ENCODE measurements at regions of chr6 and their contacts with region 1.

Region 1: GRCh38 chr6:41591859-41592502 is 45.8 kb downstream of the FOXP4 start:
- DNase-seq: peak; percentile 92
- H3K4me3 ChIP-seq: peak overlapping the region in 1 of 2 experiments; percentile 28; a peak in 1 of 4 replicates
- H3K27ac ChIP-seq: no peak overlapping the region
- H3K4me1 ChIP-seq: peaks cover 0 to 27% of the 10 kb centered on the region in 2 experiments; a peak in 1 of 4 replicates
- H3K27me3 ChIP-seq: no peaks in the 10 kb centered on the region
- CTCF ChIP-seq: peak; percentile 89
- EP300 ChIP-seq: no peak
- RAD21 ChIP-seq: peak; percentile 92

Region 2: GRCh38 chr6:41449399-41450245 is 142.4 kb before region 1 on chr6:
- CTCF ChIA-PET with region 1: interaction called, 12 read pairs
- POLR2A ChIA-PET with region 1: no interaction called
- DNase-seq: no peak
- H3K4me3 ChIP-seq: no peak overlapping the region
- H3K27ac ChIP-seq: no peak overlapping the region; a peak in 1 of 4 replicates
- H3K4me1 ChIP-seq: peaks cover 0 to 20% of the 10 kb centered on the region in 2 experiments; a peak in 1 of 4 replicates
- H3K27me3 ChIP-seq: peaks cover 4% of the 10 kb centered on the region; the same call in 1 of the 2 replicates
- CTCF ChIP-seq: no peak
- EP300 ChIP-seq: no peak
- RAD21 ChIP-seq: no peak

Region 3: GRCh38 chr6:41463062-41463930 is 128.7 kb before region 1 on chr6:
- CTCF ChIA-PET with region 1: interaction called, 183 read pairs
- POLR2A ChIA-PET with region 1: no interaction called
- DNase-seq: peak; percentile 83
- H3K4me3 ChIP-seq: no peak overlapping the region; a peak in 1 of 4 replicates
- H3K27ac ChIP-seq: no peak overlapping the region
- H3K4me1 ChIP-seq: peaks cover 0 to 5% of the 10 kb centered on the region in 2 experiments; a peak in 1 of 4 replicates
- H3K27me3 ChIP-seq: no peaks in the 10 kb centered on the region
- CTCF ChIP-seq: peak; percentile 71
- EP300 ChIP-seq: no peak
- RAD21 ChIP-seq: peak; percentile 93

Region 4: DNA sequence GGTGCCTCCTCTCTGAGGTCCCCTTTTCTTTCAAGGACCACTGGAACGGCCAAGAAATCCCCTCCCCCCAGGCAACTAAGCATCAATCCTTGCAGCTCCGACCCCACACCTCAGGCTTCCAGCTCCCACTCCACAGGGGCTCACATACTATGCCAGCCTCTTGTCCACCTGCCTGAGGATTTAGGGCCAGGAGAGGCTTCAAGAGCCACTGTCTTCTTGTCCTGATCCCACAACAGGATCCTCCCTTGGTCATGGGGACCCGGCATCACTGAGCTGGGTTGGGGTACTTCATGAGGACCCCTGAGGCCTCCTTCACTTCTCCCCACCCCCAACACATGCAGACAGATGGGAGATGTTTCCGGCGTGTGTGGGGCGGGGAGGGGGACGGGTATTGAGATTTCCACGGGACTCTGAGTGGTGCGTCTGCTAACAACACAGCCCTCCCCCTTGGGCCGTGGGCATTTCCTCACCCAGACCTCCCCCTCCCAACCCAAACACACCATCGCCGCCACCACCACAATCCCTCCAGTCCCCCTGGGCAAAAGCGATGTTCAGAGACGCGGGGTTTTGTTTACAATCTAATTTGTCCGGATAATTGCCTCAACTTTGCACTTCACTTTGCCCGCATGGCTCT is 46.8 kb before region 1 on chr6:
- CTCF ChIA-PET with region 1: interaction called, 13 read pairs
- POLR2A ChIA-PET with region 1: no interaction called
- DNase-seq: no peak
- H3K4me3 ChIP-seq: peak overlapping the region; percentile 67 to 81
- H3K27ac ChIP-seq: peak overlapping the region in 1 of 2 experiments; percentile 29; a peak in 1 of 4 replicates
- H3K4me1 ChIP-seq: peaks cover 7 to 16% of the 10 kb centered on the region in 2 experiments; a peak in 2 of 4 replicates
- H3K27me3 ChIP-seq: no peaks in the 10 kb centered on the region
- CTCF ChIP-seq: no peak
- EP300 ChIP-seq: no peak
- RAD21 ChIP-seq: no peak

Region 5: DNA sequence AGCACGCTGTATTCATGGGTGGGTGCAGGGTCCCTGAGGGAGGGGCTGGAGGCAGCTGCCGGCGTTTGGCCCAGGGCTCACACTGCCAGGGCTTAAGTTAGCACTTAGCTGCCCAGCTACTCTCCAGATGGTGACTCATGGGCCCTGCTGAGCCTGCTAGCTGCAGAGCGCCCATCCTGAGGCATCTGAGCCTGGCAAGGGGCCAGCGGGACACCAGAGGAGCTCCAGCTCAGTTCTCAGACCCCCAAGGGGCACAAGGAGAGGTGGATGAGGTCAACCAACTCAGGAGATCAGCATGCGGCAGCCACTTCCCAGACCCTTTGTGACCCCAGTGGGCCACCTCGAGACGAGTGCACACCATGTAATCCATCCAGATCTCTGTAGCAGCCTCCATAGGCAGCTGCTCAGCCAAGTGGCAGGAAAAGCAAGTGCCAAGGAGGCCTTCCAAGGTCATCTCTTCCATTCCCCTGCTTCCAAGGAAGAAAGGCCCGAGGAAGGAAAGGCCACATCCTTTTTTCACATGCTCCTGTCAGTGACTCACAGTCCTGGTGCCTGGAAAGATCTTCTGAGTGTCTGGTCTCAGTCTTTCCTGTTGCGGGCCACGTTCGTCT is 10.5 kb before region 1 on chr6:
- CTCF ChIA-PET with region 1: interaction called, 25 read pairs
- POLR2A ChIA-PET with region 1: no interaction called
- DNase-seq: peak; percentile 63
- H3K4me3 ChIP-seq: 0 out of 4 replicates have a peak overlapping the region, but pooled peaks of 1 of the 2 experiments have one; percentile 1
- H3K27ac ChIP-seq: peak overlapping the region; percentile 60 to 93
- H3K4me1 ChIP-seq: peaks cover 30 to 49% of the 10 kb centered on the region in 2 experiments; a peak in 3 of 4 replicates
- H3K27me3 ChIP-seq: no peaks in the 10 kb centered on the region
- CTCF ChIP-seq: no peak
- EP300 ChIP-seq: peak in 1 of 2 experiments; percentile 61; a peak in 1 of 4 replicates
- RAD21 ChIP-seq: no peak